BJ (cell line): ENCODE measurements at regions of chr3 and their contacts with region 1.

Region 1: DNA sequence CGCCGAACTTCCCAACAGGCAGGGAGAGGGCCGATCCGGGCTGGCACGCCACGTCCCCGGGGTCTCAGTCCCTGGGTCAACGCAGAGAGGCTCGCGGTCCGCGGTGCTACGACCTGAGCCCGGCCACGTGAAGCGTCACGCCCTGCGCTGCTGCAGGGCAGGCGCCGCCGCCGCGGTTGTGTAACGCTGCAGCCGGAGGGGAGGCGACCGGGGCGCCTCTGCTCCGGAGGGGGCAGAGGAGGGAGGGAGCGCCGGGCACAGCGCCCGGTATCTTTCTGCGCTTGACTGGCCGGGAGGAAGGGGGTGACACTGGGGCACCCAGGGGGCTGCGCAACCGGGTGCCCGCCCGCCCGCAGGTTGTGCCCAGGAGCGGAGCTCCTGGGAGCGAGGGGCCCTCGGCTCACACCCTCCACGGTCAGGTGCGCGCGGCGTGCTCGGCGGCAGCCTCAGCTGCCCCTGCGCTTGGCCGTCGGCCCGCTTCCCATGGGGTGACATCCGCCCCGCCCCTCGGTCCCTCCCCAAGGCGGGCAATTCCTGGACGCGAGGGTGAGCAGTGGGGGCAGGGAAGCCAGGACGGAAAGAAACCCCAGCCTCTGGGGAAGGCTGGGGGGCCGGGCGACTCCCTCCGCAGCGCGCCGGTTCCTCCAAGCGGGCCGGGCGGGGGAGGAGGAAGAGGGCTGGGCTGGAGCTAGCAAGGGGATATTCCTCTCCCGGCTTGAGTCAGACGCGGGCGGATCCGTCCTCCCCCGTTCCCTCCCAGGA is 852 bp upstream of the BHLHE40 start:
- DNase-seq: peak; percentile 90
- H3K4me3 ChIP-seq: peak overlapping the region; percentile 72
- H3K27me3 ChIP-seq: no peaks in the 10 kb centered on the region
- CTCF ChIP-seq: no peak

Region 2: DNA sequence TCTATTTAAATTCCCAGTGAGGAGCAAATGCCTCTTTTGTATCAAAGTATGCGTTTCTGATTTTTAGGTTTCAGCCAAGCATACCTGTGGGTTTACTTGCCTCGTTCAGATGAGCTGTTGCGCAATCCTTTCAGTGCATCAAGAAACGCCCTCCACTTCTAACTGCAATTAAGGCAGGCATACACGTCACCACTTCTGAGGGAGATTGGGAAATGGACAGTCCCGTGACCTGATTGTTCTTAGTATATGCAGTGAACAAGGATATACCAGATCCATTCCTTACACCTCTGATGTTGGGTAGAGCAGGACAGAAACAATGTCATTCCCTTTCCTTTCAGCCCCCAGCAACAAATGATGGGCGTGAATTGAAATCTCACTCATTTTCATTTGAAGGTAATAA is 266.2 kb before region 1 on chr3:
- CTCF ChIA-PET with region 1: interaction called, 121 read pairs
- POLR2A ChIA-PET with region 1: no interaction called
- DNase-seq: no peak
- H3K4me3 ChIP-seq: no peak overlapping the region
- H3K27me3 ChIP-seq: no peaks in the 10 kb centered on the region
- CTCF ChIP-seq: no peak

Region 3: DNA sequence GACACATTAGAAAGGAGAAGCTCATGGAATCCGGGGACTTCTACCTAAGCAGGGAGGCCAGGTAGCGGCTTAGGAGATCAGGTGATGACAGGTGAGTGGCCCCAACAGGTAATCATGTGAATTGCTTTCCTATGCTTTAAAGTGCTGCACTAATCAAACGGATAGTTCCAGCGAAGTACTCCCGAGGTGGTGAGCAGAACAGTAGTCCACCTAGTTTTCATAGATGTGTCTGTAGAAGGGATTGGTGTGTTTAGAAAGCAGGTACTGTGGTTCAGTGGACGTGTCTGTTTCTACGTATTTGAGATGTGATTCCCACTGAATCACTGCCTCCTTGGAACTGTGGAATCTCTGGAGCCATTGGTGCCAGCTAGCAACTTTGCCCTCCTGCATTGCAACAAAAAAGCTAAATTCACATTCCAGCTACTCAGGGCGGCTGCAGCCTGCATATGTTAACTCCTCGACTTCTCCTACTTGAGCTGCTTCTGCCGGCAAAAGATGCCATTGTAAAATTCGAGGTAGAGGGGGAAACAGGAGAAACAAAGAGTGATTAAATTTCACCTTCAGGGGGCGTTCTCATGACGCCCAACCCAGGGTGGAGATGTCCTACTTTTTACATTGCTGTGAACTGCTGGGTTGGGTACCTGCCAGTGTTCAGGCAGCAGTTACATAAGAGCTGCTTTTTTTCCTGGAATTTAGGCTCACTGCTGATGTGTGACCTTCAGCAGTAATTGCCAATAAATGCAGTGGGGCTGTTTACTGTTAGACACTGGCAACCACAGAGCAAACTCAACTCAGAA is 257.9 kb before region 1 on chr3:
- CTCF ChIA-PET with region 1: interaction called, 26 read pairs
- POLR2A ChIA-PET with region 1: no interaction called
- DNase-seq: no peak
- H3K4me3 ChIP-seq: no peak overlapping the region
- H3K27me3 ChIP-seq: no peaks in the 10 kb centered on the region
- CTCF ChIP-seq: peak; percentile 27

Region 4: DNA sequence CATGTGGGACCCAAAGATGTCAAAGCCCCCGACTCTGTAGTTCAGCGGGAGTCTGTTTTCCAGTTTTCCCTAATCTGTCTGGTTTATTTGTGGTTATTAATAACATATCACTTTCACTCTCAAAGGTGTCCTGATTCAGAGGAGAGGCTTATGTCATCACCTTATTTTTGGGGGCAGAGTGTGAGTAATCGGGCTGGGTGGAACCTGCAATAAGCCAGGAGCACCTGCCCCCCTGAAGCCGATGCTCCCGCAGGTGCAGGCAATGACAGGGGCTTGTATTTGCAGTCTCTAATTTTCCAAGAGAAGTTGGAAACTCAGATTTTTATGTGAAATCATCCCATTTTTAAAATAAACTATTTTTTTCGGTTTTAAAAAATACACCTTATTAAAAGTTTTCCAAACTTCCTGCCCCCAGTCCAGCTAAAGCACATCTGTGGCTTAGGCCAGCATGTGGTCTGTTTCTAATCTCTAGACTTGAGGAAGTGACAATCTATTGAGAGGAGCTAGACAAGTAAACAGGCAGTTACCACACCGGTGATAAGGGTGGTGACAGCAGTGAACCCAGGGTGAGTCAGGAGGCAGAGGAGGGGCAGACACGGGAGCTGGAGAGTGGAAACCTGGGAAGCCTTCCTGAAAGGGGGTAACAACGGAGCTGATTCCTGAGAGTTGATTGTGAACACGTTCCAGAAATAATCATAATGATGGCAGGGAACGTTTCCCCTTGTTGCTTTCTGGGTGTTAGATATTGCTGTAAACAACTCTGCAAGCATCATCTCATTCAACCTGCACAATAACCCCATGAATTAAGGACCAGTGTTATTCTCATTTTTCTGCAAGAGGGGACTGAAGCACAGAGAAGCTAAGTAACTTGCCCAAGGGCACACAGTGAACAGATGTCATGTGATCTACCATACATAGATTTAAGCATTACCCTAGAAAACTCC is 38.1 kb after region 1 on chr3:
- CTCF ChIA-PET with region 1: interaction called, 13 read pairs
- POLR2A ChIA-PET with region 1: interaction called, 6 read pairs
- DNase-seq: no peak
- H3K4me3 ChIP-seq: no peak overlapping the region
- H3K27me3 ChIP-seq: no peaks in the 10 kb centered on the region
- CTCF ChIP-seq: no peak

Region 5: DNA sequence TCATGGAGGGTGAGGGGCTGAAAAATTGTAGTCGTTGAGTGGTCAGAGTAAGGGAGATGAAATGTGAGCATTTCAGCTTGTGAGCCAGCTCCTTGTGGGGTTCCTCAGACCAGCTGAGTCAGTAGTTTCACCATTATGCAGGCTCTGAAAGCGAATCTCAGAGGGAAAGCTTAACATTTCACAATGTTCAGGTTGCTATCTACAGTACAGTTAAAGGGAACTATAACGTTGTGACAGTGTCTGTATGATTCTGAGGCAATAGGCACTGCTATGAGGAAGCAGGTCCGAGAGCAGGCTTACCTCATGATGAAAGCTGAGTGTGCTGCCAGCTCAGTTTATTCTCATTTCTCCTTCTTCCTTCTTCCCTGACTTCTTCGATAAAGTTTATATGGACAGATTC is 678.7 kb after region 1 on chr3:
- CTCF ChIA-PET with region 1: no interaction called
- POLR2A ChIA-PET with region 1: no interaction called
- DNase-seq: no peak
- H3K4me3 ChIP-seq: no peak overlapping the region
- H3K27me3 ChIP-seq: no peaks in the 10 kb centered on the region
- CTCF ChIP-seq: no peak